HCT116 (cell line): ENCODE measurements at regions of chr16 and their contacts with region 1.

Region 1: GRCh38 chr16:58629572-58630104 is at the start of gene CNOT1:
- DNase-seq: peak; percentile 98
- ATAC-seq: peak; percentile 90
- H3K4me3 ChIP-seq: peak within 1 kb of the TSS; percentile 83 to 99
- H3K27ac ChIP-seq: peak within 1 kb of the TSS; percentile 96
- H3K4me1 ChIP-seq: peaks cover 13 to 22% of the 10 kb centered on the region in 2 experiments
- H3K27me3 ChIP-seq: no peaks in the 10 kb centered on the region
- CTCF ChIP-seq: no peak
- POLR2A ChIP-seq: peak; percentile 38
- RAD21 ChIP-seq: no peak
- total RNA-seq, gene CNOT1: 230 TPM

Region 2: DNA sequence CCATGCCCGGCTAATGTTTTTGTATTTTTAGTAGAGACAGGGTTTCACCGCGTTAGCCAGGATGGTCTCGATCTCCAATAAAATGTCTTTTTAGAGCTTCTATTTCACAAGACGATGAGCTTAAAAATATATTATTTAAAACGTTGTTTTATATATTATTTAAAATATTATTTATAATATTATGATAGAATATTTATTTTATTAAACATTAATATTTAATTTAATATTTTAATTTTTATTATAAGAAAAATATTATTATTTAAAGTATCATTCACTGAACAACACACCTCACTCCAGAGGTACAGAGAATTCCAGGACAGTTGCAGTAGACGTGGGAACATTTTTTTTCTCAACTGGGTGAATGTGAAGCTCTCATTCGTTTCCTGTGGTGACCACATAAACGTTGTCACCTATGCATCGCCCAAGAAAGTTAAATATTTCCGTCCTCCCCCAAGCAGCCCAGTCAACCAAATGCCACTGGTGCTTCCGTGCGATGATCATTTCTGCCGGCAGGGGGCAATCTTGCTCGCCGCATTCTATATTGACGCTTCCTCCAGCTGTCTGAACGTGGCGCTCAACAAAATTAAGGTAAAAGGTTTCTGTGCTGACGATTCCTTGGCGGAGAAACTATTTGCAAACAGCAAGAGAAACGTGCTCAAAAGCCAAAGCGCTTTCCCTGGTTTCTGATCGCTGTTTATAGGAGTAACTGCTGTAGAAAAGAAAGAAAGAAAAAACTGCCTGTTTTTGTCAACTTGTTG is 293.1 kb before region 1 on chr16:
- CTCF ChIA-PET with region 1: no interaction called
- POLR2A ChIA-PET with region 1: no interaction called
- RAD21 ChIA-PET with region 1: no interaction called
- intact Hi-C with region 1: loop called (anchors 10 kb)
- DNase-seq: peak; percentile 77
- ATAC-seq: peak; percentile 81
- H3K4me3 ChIP-seq: 0 out of 4 replicates have a peak overlapping the region, but pooled peaks of 1 of the 2 experiments have one; percentile 2
- H3K27ac ChIP-seq: no peak overlapping the region
- H3K4me1 ChIP-seq: peaks cover 6 to 10% of the 10 kb centered on the region in 2 experiments
- H3K27me3 ChIP-seq: no peaks in the 10 kb centered on the region
- CTCF ChIP-seq: peak; percentile 91 to 98 (median 95)
- POLR2A ChIP-seq: no peak
- RAD21 ChIP-seq: peak; percentile 89

Region 3: DNA sequence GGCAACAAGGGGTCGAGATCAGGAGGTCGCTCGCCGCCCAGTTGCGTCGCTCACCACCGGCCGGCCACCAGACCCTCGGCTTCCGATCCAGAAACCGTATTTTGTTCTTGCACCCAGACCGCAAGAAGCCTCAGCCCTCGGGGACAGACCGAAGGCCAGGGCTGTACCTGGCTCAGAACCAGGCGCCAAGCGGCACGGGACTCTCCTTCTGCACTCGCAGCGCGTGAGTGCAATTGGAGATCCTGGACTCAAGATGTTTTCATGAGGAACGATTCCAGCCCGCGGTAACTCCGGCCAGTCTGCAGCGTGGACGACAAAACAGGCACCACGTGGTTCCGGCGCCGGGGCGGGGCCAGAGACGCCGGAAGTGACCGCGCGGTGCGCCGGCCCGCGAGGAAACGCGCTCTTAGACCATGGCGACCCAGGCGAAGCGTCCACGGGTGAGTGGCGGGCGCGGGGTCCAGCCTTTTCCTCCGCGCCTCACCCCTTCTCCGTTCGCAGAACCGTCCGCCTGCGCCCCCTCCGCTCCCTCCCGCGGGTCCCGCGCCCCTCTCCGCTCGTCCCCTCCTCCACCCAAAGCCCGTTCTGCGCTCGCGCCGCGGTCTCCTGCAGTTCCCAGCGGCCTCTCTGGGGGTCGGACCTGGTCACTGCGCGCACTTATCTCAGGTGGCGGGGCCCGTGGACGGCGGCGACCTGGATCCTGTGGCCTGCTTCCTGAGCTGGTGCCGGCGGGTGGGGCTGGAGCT is 114.3 kb before region 1 on chr16 and contains the start of gene SETD6:
- CTCF ChIA-PET with region 1: no interaction called
- POLR2A ChIA-PET with region 1: no interaction called
- RAD21 ChIA-PET with region 1: no interaction called
- intact Hi-C with region 1: no loop called
- DNase-seq: peak; percentile 70
- ATAC-seq: peak; percentile 80
- H3K4me3 ChIP-seq: peak within 1 kb of the TSS; percentile 72 to 85
- H3K27ac ChIP-seq: peak within 1 kb of the TSS; percentile 88
- H3K4me1 ChIP-seq: peaks cover 5 to 22% of the 10 kb centered on the region in 2 experiments; a peak in 3 of 4 replicates
- H3K27me3 ChIP-seq: no peaks in the 10 kb centered on the region
- CTCF ChIP-seq: no peak; a peak in 1 of 6 replicates
- POLR2A ChIP-seq: peak; percentile 60
- RAD21 ChIP-seq: no peak
- total RNA-seq, gene SETD6: 26.6 TPM

Region 4: GRCh38 chr16:58578642-58579041 is 51.0 kb before region 1 on chr16:
- CTCF ChIA-PET with region 1: no interaction called
- POLR2A ChIA-PET with region 1: no interaction called
- RAD21 ChIA-PET with region 1: no interaction called
- intact Hi-C with region 1: no loop called
- DNase-seq: no peak
- ATAC-seq: no peak
- H3K4me3 ChIP-seq: no peak overlapping the region
- H3K27ac ChIP-seq: no peak overlapping the region
- H3K4me1 ChIP-seq: no peaks in the 10 kb centered on the region
- H3K27me3 ChIP-seq: no peaks in the 10 kb centered on the region
- CTCF ChIP-seq: no peak
- POLR2A ChIP-seq: no peak
- RAD21 ChIP-seq: no peak

Region 5: GRCh38 chr16:58644805-58645484 is 15.3 kb after region 1 on chr16:
- CTCF ChIA-PET with region 1: no interaction called
- POLR2A ChIA-PET with region 1: no interaction called
- RAD21 ChIA-PET with region 1: no interaction called
- intact Hi-C with region 1: no loop called
- DNase-seq: no peak
- ATAC-seq: peak; percentile 67
- H3K4me3 ChIP-seq: no peak overlapping the region
- H3K27ac ChIP-seq: no peak overlapping the region
- H3K4me1 ChIP-seq: peaks cover 0 to 6% of the 10 kb centered on the region in 2 experiments; a peak in 2 of 4 replicates
- H3K27me3 ChIP-seq: no peaks in the 10 kb centered on the region
- CTCF ChIP-seq: no peak
- POLR2A ChIP-seq: no peak
- RAD21 ChIP-seq: no peak

Region 6: GRCh38 chr16:58727028-58727781 is 97.6 kb after region 1 on chr16:
- CTCF ChIA-PET with region 1: no interaction called
- POLR2A ChIA-PET with region 1: no interaction called
- RAD21 ChIA-PET with region 1: no interaction called
- intact Hi-C with region 1: no loop called
- DNase-seq: no peak
- ATAC-seq: no peak
- H3K4me3 ChIP-seq: no peak overlapping the region
- H3K27ac ChIP-seq: no peak overlapping the region
- H3K4me1 ChIP-seq: peaks cover 3% of the 10 kb centered on the region in 2 experiments; a peak in 3 of 4 replicates
- H3K27me3 ChIP-seq: no peaks in the 10 kb centered on the region
- CTCF ChIP-seq: no peak
- POLR2A ChIP-seq: no peak
- RAD21 ChIP-seq: no peak